ENCODE measurements at regions of chr1 and their contacts with region 1.

Region 1: GRCh38 chr1:151340870-151341754 is 5.9 kb downstream of the RFX5 start:
- DNase-seq: no peak
- ATAC-seq: peak; percentile 83 to 86
- H3K4me3 ChIP-seq: no peak overlapping the region
- H3K27ac ChIP-seq: no peak overlapping the region
- H3K4me1 ChIP-seq: peaks cover 2% of the 10 kb centered on the region
- H3K27me3 ChIP-seq: no peaks in the 10 kb centered on the region

Region 2: DNA sequence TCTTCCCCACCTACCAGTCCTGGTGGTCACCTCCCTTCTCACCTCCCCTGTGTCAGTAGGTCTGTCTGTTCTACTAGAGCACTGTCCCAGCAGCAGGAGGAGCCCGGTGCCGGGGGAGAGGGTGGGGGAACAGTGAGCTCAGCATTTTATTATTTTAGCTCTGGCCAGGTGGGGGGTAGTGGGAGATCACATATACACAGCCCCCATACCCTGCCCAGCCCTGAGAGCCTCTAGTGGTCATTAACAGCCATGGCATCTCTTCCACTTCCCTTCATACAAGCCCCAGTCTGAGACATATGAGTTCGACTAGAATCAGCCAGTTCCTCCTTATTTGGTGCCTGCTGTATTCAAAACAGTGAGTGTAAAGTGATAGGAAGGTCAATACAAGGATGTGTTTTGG is 165.2 kb before region 1 on chr1 and contains the start of gene TMOD4:
- intact Hi-C with region 1: no loop called
- DNase-seq: no peak
- ATAC-seq: peak; percentile 30 to 34
- H3K4me3 ChIP-seq: no peak within 1 kb of the TSS
- H3K27ac ChIP-seq: no peak within 1 kb of the TSS
- H3K4me1 ChIP-seq: no peaks in the 10 kb centered on the region
- H3K27me3 ChIP-seq: no peaks in the 10 kb centered on the region
- total RNA-seq, gene TMOD4: not detected

Region 3: DNA sequence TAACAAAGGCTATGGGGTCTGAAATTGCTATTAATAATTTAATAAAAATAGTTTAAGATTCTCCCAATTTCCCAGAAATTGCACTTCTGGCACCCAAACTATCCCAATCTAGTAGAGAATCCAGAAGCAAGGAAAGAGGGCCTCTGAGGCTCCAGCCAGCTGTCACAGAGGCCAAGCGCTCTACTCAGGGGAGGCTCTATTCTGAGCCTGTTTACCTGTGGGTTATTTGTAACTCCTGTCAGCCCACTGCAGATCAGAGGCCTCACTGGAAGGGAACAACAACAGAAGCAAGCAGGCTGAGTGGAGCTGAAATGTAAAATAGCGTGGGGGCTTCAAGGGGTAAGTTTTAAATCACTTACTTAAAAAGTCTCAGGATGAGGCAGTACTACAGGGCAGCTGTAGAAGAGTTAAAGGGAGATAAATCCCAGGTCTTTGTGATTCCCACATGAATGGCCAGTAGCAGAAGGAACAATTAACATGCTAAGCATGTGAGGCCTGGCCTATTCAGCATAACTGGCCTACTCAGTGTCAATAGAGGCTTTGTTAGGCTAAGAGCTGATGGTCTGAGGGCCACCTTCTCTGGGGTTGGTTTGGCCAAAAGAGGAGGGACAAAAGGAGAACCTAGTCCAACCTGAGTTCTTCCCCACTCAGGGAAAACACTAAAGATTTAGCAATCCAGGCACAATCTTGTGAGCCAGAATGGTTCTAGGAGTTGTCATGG is 46.2 kb before region 1 on chr1:
- intact Hi-C with region 1: loop called (anchors 5 kb)
- DNase-seq: no peak
- ATAC-seq: no peak
- H3K4me3 ChIP-seq: no peak overlapping the region
- H3K27ac ChIP-seq: no peak overlapping the region
- H3K4me1 ChIP-seq: no peaks in the 10 kb centered on the region
- H3K27me3 ChIP-seq: no peaks in the 10 kb centered on the region

Measured in right cardiac atrium (tissue), 5 donors.